Activated B cell treated with CpG ODN at 0.5 μM for 24 hours (primary cell): ENCODE measurements at regions of chr12 and their contacts with region 1.

Region 1: GRCh38 chr12:117836999-117837736 is 131.6 kb downstream of the KSR2 start:
- DNase-seq: peak; percentile 53
- ATAC-seq: peak; percentile 37
- H3K4me3 Mint-ChIP-seq: no peak overlapping the region
- H3K27ac Mint-ChIP-seq: no peak overlapping the region
- H3K4me1 Mint-ChIP-seq: peaks cover 3% of the 10 kb centered on the region
- H3K27me3 Mint-ChIP-seq: peaks cover 10% of the 10 kb centered on the region
- CTCF ChIP-seq: peak; percentile 58

Region 2: DNA sequence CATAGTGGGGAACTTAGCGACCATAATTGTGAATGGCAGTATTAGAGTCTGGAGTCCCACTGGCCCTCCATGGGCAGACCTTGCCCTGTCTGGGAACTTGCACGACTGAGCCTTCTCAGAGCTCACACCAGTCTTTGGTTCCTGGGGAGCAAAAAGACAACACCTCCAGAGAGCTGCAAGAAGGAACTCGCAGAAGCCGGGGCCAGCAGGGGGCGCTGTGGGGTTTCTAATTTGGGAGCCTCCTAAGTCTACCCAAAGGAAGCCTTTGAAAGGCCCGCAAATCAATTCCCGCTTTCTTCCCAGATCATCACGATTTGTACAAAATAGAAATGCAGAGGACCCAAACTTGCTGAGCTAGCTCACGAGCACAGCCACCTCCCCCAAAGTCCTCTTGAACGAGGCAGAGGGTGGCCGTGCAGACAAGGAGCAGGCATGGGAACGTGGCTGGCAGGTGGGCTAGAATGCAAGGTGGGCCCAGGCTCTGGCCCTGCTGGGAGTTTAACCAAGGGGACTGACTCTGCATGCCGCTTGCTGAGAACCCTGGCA is 600.6 kb before region 1 on chr12:
- CTCF ChIA-PET with region 1: no interaction called
- POLR2A ChIA-PET with region 1: no interaction called
- intact Hi-C with region 1: loop called (anchors 1 kb)
- DNase-seq: peak; percentile 25
- ATAC-seq: no peak
- H3K4me3 Mint-ChIP-seq: no peak overlapping the region
- H3K27ac Mint-ChIP-seq: no peak overlapping the region
- H3K4me1 Mint-ChIP-seq: no peaks in the 10 kb centered on the region
- H3K27me3 Mint-ChIP-seq: peaks cover 6% of the 10 kb centered on the region
- CTCF ChIP-seq: no peak

Region 3: DNA sequence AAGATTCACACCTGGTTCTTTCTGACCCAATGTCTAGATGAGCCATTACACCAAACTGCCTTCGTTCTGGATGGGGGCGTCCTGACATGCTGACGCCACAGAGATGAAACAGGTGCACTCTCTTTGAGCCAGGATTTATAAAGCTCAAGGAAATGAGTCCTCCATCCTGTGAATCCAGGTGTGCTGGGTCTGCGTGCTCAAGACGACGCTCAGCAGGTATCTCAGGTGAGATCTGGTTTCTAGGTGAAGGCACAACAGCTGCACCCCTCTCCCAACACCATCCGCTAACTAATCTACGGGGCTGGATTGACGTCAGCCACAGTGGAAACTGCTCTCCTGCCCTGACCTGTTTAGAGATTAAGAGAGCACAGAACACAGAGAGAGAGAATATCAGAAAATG is 70.0 kb after region 1 on chr12:
- CTCF ChIA-PET with region 1: no interaction called
- POLR2A ChIA-PET with region 1: no interaction called
- intact Hi-C with region 1: no loop called
- DNase-seq: no peak
- ATAC-seq: no peak
- H3K4me3 Mint-ChIP-seq: no peak overlapping the region
- H3K27ac Mint-ChIP-seq: no peak overlapping the region
- H3K4me1 Mint-ChIP-seq: no peaks in the 10 kb centered on the region
- H3K27me3 Mint-ChIP-seq: no peaks in the 10 kb centered on the region
- CTCF ChIP-seq: no peak